ENCODE measurements at regions of chr9 and their contacts with region 1.

Region 1: DNA sequence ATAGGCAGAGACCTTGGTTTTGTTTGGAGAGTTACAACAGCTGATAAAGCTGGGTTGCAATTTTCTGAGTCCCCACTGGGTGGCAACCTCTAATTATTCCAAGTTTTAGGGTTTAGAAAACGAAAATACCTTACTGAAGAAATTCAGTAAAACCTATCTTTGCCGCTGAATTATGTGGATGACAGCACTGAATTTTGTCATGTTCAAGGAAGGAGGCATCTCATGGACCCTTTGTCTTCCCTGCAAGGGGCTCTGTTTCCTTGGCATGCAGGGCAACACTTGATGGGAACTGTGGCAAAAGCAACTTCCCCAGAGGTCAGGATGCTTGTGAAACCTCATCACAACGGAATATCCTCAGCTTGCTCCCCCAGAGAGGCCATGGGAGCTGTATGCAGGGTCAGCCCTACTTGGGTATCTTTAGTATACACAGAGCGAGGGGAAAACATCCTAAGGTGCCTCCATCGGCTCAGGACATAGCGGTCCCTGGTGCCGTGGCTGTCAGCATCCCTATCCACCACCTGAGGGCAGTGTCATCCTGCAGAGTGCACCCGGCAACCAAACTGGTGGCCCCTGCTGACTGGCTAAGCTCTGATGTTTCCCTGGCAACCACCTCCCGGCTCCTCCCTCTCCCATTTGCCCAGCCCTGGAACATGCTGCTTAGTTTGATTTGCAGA is 123.1 kb downstream of the RXRA start:
- DNase-seq: peak; percentile 92 to 98
- ATAC-seq: peak; percentile 92 to 97
- H3K4me3 ChIP-seq: no peak overlapping the region
- H3K27ac ChIP-seq: peak overlapping the region in 1 of 2 experiments; percentile 65; a peak in 2 of 6 replicates
- H3K4me1 ChIP-seq: peaks cover 9% of the 10 kb centered on the region
- CTCF ChIP-seq: peak; percentile 81
- EP300 ChIP-seq: no peak
- POLR2A ChIP-seq: no peak
- RAD21 ChIP-seq: peak; percentile 97 to 99

Region 2: DNA sequence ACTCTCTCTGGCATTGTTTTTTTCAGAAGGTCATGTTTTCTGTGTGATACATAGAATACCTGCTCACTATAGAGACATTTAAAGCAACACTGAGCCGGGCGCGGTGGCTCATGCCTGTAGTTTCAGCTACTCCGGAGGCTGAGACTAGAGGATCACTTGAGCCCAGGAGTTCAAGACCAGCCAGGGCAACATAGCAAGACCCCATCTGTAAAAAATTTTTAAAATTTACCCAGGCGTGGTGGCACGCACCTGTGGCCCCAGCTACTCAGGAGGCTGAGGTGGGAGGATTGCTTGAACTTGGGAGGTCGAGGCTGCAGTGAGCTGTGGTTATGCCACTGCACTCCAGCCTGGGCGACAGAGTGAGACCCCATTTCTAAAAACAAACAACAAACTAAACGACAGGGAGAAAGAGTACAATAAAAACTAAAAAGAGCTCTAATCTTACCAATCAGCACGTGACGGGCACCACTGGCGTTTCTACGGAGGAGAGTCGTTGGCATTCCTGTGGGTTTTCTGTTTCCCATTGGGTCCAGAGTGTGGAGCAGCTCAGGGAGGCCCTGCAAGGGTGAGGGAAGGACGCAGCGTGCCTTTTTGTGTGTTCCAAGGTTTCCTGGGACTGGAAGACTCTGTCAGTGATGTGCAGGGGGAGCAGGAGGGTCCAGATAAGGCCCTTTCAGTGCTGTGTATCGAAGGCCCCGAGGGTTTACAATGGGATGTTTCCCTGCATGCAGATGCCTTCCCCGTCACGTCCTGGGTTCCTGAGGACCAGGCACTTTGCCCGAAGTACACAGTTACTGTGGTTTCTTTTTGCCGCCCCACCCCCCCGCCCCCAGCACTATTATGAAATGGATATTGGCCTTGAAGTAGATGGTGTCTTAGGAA is 277.8 kb before region 1 on chr9:
- CTCF ChIA-PET with region 1: interaction called, 114 read pairs
- POLR2A ChIA-PET with region 1: no interaction called
- DNase-seq: no peak
- ATAC-seq: no peak
- H3K4me3 ChIP-seq: no peak overlapping the region
- H3K27ac ChIP-seq: peak overlapping the region in 1 of 2 experiments; percentile 5; a peak in 1 of 6 replicates
- H3K4me1 ChIP-seq: peaks cover 20% of the 10 kb centered on the region
- CTCF ChIP-seq: no peak
- EP300 ChIP-seq: no peak
- POLR2A ChIP-seq: no peak
- RAD21 ChIP-seq: no peak

Region 3: GRCh38 chr9:134525841-134526595 is 76.7 kb after region 1 on chr9:
- CTCF ChIA-PET with region 1: interaction called, 11 read pairs
- POLR2A ChIA-PET with region 1: no interaction called
- DNase-seq: no peak
- ATAC-seq: no peak
- H3K4me3 ChIP-seq: no peak overlapping the region
- H3K27ac ChIP-seq: no peak overlapping the region
- H3K4me1 ChIP-seq: no peaks in the 10 kb centered on the region
- CTCF ChIP-seq: no peak
- EP300 ChIP-seq: no peak
- POLR2A ChIP-seq: no peak
- RAD21 ChIP-seq: no peak

Region 4: GRCh38 chr9:134602547-134603309 is 153.4 kb after region 1 on chr9:
- CTCF ChIA-PET with region 1: interaction called, 34 read pairs
- POLR2A ChIA-PET with region 1: interaction called, 3 read pairs
- DNase-seq: peak; percentile 88 to 92
- ATAC-seq: peak; percentile 89 to 94
- H3K4me3 ChIP-seq: no peak overlapping the region
- H3K27ac ChIP-seq: peak overlapping the region; percentile 94 to 96
- H3K4me1 ChIP-seq: peaks cover 36% of the 10 kb centered on the region
- CTCF ChIP-seq: no peak
- EP300 ChIP-seq: peak; percentile 84 to 93; a peak in 4 of 5 replicates
- POLR2A ChIP-seq: no peak
- RAD21 ChIP-seq: peak; percentile 16 to 60; a peak in 4 of 5 replicates

Region 5: DNA sequence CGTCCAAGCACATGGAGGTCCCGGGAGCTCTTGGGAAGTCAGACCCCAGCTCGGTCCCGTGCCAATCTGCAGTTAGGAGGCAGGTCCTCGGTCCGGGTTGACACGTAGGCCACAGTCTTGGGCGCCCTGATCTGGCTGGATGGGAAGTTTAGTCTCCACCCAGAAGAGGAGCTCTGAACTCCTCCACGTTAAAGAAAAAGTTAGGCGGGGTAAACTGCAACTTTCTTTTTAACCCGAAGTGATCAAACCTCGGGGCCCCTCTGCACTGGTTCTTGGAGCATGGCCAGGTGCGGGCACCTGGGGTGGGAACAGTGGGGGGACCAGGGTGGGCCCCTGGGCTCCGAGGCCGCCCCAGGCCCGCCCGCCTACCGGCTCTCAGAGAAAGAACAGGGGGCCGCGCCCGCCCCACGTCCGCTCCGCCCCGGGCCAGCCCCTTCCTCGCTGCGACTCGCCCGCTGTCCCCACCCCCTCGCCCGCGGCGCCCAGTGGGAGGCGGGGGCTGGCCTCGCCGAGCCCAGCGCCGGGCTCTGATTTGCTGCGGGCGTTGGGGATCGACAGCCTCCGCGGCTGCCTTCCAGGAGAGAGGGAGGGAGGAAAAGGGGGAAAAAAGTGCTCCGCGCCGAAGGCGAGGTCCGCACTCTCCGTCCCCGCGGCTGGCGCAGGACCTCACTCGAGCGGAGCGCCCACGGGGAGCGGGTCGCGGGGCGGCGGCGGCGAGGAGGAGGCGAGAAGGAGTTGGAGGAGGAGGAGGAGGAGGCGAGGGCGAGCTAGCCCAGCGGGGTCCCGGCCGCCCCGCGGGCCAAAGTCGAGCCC is 192.0 kb after region 1 on chr9 and contains the start of gene COL5A1:
- CTCF ChIA-PET with region 1: interaction called, 52 read pairs
- POLR2A ChIA-PET with region 1: interaction called, 4 read pairs
- DNase-seq: peak; percentile 84
- ATAC-seq: peak; percentile 74 to 90
- H3K4me3 ChIP-seq: peak within 1 kb of the TSS; percentile 73
- H3K27ac ChIP-seq: peak within 1 kb of the TSS; percentile 78 to 93
- H3K4me1 ChIP-seq: peaks cover 55% of the 10 kb centered on the region
- CTCF ChIP-seq: no peak
- EP300 ChIP-seq: no peak
- POLR2A ChIP-seq: peak; percentile 72
- RAD21 ChIP-seq: 0 out of 5 replicates have a peak, but pooled peaks of 1 of the 2 experiments have one; percentile 10
- polyA plus RNA-seq, gene COL5A1: 15.2 and 16.1 TPM in 2 replicates

Region 6: GRCh38 chr9:134698587-134699342 is 249.4 kb after region 1 on chr9:
- CTCF ChIA-PET with region 1: interaction called, 26 read pairs
- POLR2A ChIA-PET with region 1: no interaction called
- DNase-seq: peak; percentile 74 to 81
- ATAC-seq: peak; percentile 83 to 92
- H3K4me3 ChIP-seq: no peak overlapping the region
- H3K27ac ChIP-seq: peak overlapping the region; percentile 62 to 78; a peak in 5 of 6 replicates
- H3K4me1 ChIP-seq: peaks cover 11% of the 10 kb centered on the region
- CTCF ChIP-seq: peak; percentile 82
- EP300 ChIP-seq: no peak
- POLR2A ChIP-seq: no peak
- RAD21 ChIP-seq: peak; percentile 88 to 90

Measured in A549 (cell line).